GM10248 (cell line): ENCODE measurements at regions of chr6 and their contacts with region 1.

Region 1: GRCh38 chr6:53967415-53967814 is 143.8 kb upstream of the MLIP start:
- DNase-seq: no peak
- CTCF ChIP-seq: no peak

Region 2: GRCh38 chr6:53956068-53956711 is 11.2 kb before region 1 on chr6:
- CTCF ChIA-PET with region 1: interaction called, 10 read pairs
- POLR2A ChIA-PET with region 1: no interaction called
- DNase-seq: peak; percentile 55
- CTCF ChIP-seq: peak; percentile 52